ENCODE measurements at regions of chr20 and their contacts with region 1.

Region 1: DNA sequence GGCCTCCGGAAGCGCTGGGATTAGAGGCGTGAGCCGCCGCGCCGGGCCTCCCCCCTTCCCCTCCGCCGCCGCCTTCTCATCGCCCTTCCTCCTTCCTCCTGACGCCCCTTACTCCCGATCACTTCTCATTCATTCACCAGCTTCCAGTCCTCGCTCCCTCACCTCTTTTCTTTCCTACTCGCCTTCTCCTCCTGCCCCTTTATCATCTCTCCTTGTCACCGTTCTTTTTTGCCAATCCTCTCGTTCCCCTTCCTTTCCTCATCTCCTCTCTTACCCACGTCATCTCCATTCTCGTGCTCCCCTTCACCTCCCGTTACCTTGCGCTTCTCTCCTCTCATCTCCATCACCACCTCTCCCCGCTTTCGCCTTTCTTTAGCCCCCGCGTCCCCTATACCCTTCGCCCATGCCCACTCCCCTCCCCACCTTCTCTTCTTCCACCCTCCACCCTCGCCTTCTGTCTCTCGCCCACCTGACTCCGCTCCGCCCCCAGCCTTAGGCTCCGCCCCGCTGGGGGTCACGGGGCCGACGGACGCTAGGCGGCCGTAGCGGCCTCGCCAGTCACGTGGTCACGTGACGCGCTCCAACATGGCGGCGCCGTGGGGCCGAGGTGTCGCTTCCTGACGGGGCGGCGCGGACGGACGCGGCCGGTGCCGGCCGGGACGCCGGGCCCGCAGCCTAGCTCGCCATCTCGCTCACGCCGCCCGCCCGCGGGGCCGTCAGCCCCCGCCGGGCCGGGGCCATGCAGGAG is at the start of gene ARFGEF2:
- DNase-seq: peak; percentile 73
- H3K4me3 ChIP-seq: peak within 1 kb of the TSS; percentile 92
- H3K27ac ChIP-seq: peak within 1 kb of the TSS; percentile 87
- H3K27me3 ChIP-seq: no peaks in the 10 kb centered on the region
- CTCF ChIP-seq: no peak

Region 2: DNA sequence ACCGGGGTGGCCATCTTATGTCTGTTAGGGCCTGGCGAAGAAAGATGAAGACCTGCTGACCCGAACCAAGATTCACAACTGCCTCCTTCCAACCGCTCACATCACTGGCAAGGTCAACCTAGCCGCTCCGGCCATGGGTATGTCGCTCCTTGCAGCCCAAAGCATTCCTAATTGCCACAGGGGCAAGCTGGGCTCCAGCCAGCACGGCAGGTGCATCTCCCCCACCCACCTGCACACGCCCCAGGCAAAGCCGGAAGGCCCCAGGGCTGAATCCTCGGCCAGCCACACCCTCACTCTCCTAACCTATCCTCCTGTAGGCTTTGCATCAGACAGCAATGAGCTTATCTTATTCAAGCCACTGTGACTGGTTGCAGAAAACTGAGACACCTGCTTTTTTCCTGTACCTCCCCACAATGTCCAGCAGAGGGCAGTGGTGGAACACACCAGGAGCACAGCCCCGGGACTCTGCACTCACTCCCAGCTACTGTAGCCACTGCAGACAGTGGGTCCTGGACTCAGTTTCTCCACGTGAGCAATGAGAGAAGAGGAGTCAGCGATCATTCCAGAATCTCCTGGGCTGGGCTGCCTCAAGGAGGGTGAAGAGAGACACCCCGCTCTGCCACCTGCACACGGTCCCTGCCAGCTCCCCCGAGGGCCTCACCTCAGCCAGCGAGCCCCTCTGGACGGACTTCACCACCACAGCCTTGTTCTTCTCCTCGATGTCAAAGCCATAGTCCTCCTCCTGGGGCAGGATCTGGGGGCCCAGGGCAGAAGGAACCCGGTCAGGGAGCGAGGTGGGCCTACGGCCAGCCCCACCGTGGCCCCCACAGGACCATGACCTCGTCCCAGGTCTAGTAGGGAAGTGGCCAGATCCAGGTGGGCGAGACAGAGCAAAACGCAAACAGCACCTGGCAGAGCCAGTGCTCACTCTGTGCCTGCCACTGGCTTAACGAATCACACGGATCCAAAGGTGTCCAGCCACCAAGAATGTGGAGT is 263.6 kb before region 1 on chr20:
- in situ Hi-C with region 1: loop called (anchors 25 kb)
- DNase-seq: peak; percentile 69
- H3K4me3 ChIP-seq: no peak overlapping the region
- H3K27ac ChIP-seq: no peak overlapping the region
- H3K27me3 ChIP-seq: no peaks in the 10 kb centered on the region
- CTCF ChIP-seq: peak; percentile 95

Measured in brain microvascular endothelial cell (primary cell).